A673 (cell line): ENCODE measurements at regions of chr12 and their contacts with region 1.

Region 1: GRCh38 chr12:126069549-126070165 is 1004.4 kb downstream of the AACS start:
- DNase-seq: peak; percentile 86
- H3K4me3 ChIP-seq: no peak overlapping the region
- H3K27ac ChIP-seq: no peak overlapping the region
- H3K4me1 ChIP-seq: no peaks in the 10 kb centered on the region
- H3K27me3 ChIP-seq: no peaks in the 10 kb centered on the region
- CTCF ChIP-seq: peak; percentile 85

Region 2: DNA sequence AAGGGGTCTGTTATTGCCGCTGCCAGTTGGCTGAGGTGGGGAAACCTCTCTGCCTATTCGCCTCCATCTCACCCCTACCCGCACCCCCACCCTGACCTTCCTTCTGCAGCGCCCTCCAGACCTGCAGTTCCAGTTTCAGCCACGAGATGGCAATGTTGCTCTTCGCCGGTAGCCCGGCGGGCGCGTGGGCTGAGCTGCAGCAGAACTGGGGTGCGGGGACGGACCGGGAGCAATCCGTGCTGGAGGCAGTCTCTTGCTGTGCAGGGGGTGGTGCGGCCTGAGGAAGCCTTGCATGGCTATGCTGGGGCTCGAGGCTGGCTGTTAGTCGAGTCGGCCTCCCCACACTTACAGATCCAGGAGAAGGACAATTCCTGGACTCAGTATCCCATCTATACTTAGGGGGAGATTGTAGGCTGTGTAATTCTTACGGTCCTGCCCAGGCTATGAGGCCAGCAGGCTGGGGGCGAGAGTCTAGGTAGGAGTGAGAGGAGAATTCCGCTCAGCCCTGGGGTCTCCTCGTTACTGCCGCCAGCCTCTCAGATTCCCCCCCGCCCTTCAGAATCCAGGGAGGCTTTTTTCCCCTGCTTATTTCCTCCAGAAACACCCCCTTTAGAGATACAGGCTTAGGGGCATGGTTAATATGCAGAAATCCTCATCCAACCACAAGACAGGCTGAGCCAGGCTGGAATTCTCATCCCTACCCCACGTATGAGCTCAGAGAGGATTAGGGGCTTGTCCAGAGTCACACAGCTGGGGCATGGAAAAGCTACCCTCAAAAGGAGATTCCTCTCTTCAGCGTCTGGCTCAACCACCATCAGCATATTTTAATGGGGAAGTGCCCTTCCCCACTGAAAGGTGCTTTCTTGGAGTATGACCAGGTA is 886.2 kb before region 1 on chr12:
- CTCF ChIA-PET with region 1: no interaction called
- POLR2A ChIA-PET with region 1: no interaction called
- intact Hi-C with region 1: loop called (anchors 10 kb)
- DNase-seq: peak; percentile 89
- H3K4me3 ChIP-seq: no peak overlapping the region
- H3K27ac ChIP-seq: no peak overlapping the region
- H3K4me1 ChIP-seq: peaks cover 31% of the 10 kb centered on the region
- H3K27me3 ChIP-seq: peaks cover 27% of the 10 kb centered on the region
- CTCF ChIP-seq: peak; percentile 99

Region 3: DNA sequence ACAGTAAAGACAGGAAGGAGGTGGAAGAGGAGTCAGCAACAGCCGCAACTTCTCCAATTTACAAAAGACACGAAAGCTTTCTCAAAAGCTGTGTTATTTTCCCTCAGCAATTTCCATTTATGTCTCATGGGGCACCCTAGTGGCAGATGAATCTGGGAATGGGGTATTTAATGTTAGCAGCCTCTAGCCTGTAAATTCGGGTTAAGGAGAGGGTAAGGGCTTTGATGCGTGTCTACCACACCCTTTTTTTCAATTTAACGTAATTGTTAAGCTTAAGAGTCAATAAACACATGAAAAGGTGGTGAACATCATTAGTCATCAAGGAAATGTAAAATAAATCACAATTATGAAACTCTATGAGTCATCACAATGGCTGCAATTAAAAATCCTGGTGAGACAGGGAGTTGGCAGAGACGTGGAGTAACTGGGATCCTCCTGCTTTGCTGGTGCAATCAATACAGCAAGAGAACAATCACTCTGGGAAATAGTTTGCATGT is 18.0 kb before region 1 on chr12:
- CTCF ChIA-PET with region 1: no interaction called
- POLR2A ChIA-PET with region 1: no interaction called
- intact Hi-C with region 1: no loop called
- DNase-seq: peak; percentile 90
- H3K4me3 ChIP-seq: no peak overlapping the region
- H3K27ac ChIP-seq: no peak overlapping the region
- H3K4me1 ChIP-seq: peaks cover 10% of the 10 kb centered on the region
- H3K27me3 ChIP-seq: no peaks in the 10 kb centered on the region
- CTCF ChIP-seq: peak; percentile 47

Region 4: DNA sequence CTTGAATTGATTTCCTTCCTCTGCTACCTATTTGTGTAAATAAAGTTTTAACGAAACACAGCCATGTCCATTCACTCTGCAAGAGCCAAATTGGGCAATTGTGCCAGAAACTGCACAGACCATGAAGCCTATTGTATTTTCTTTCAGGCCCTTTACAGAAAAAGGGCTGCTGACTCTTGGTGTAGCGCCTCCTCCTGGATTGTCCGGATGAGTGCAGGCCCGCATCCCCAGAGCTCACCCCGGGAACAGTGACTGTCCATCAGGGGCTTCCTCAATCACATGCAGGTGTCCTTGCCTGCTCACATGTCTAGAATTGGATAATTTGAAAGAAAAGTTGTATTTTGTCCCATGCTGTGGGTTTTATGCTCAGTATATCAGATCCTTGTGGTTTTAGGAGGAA is 277.8 kb after region 1 on chr12:
- CTCF ChIA-PET with region 1: no interaction called
- POLR2A ChIA-PET with region 1: no interaction called
- intact Hi-C with region 1: no loop called
- DNase-seq: no peak
- H3K4me3 ChIP-seq: no peak overlapping the region
- H3K27ac ChIP-seq: no peak overlapping the region
- H3K4me1 ChIP-seq: peaks cover 16% of the 10 kb centered on the region
- H3K27me3 ChIP-seq: no peaks in the 10 kb centered on the region
- CTCF ChIP-seq: peak; percentile 59

Region 5: GRCh38 chr12:126617312-126617711 is 547.7 kb after region 1 on chr12:
- CTCF ChIA-PET with region 1: no interaction called
- POLR2A ChIA-PET with region 1: no interaction called
- intact Hi-C with region 1: loop called (anchors 1 kb)
- DNase-seq: peak; percentile 55
- H3K4me3 ChIP-seq: no peak overlapping the region
- H3K27ac ChIP-seq: no peak overlapping the region
- H3K4me1 ChIP-seq: no peaks in the 10 kb centered on the region
- H3K27me3 ChIP-seq: no peaks in the 10 kb centered on the region
- CTCF ChIP-seq: peak; percentile 74

Region 6: GRCh38 chr12:126747530-126748149 is 678.0 kb after region 1 on chr12:
- CTCF ChIA-PET with region 1: no interaction called
- POLR2A ChIA-PET with region 1: no interaction called
- intact Hi-C with region 1: loop called (anchors 2 kb)
- DNase-seq: peak; percentile 76
- H3K4me3 ChIP-seq: no peak overlapping the region
- H3K27ac ChIP-seq: no peak overlapping the region
- H3K4me1 ChIP-seq: no peaks in the 10 kb centered on the region
- H3K27me3 ChIP-seq: no peaks in the 10 kb centered on the region
- CTCF ChIP-seq: peak; percentile 98

Region 7: GRCh38 chr12:127280393-127281275 is 1211.0 kb after region 1 on chr12:
- CTCF ChIA-PET with region 1: no interaction called
- POLR2A ChIA-PET with region 1: no interaction called
- intact Hi-C with region 1: loop called (anchors 10 kb)
- DNase-seq: no peak
- H3K4me3 ChIP-seq: no peak overlapping the region
- H3K27ac ChIP-seq: peak overlapping the region; percentile 10
- H3K4me1 ChIP-seq: peaks cover 44% of the 10 kb centered on the region
- H3K27me3 ChIP-seq: no peaks in the 10 kb centered on the region
- CTCF ChIP-seq: peak; percentile 32

Region 8: DNA sequence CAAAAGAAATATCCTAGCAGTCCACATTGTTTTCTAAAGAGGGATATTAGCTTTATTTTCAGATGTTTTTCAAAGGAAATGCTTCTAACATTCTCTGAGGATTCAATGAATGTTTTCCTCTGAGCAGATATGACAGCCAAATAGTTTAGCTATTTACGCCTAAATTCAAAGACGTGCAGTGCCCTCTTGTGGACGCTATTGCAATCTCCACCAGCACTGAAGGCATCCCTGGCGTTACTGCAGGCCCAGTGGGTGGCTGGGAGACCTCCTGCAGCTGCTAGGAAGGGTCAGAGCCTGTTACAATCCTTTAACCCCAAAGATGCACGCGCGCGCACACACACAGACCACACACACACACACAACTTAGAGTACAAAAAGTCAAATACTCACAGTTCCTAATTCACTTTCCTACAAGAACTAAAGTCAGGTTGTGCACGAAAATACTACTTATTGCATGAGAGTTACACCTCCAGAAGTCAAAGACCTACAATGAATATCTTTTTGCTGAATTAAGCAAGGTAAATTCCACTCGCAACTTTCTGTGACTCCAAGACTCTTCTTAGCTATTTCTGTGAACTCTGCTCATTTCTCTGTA is 1608.0 kb after region 1 on chr12:
- CTCF ChIA-PET with region 1: no interaction called
- POLR2A ChIA-PET with region 1: no interaction called
- intact Hi-C with region 1: loop called (anchors 2 kb)
- DNase-seq: peak; percentile 83
- H3K4me3 ChIP-seq: no peak overlapping the region
- H3K27ac ChIP-seq: no peak overlapping the region
- H3K4me1 ChIP-seq: no peaks in the 10 kb centered on the region
- H3K27me3 ChIP-seq: no peaks in the 10 kb centered on the region
- CTCF ChIP-seq: peak; percentile 91